ENCODE measurements at regions of chr17 and their contacts with region 1.

Region 1: GRCh38 chr17:60036796-60037612 is 41.7 kb downstream of the HEATR6 start:
- H3K4me3 Mint-ChIP-seq: no peak overlapping the region
- H3K27ac Mint-ChIP-seq: no peak overlapping the region
- H3K4me1 Mint-ChIP-seq: peaks cover 6% of the 10 kb centered on the region
- H3K27me3 Mint-ChIP-seq: peaks cover 15% of the 10 kb centered on the region

Region 2: DNA sequence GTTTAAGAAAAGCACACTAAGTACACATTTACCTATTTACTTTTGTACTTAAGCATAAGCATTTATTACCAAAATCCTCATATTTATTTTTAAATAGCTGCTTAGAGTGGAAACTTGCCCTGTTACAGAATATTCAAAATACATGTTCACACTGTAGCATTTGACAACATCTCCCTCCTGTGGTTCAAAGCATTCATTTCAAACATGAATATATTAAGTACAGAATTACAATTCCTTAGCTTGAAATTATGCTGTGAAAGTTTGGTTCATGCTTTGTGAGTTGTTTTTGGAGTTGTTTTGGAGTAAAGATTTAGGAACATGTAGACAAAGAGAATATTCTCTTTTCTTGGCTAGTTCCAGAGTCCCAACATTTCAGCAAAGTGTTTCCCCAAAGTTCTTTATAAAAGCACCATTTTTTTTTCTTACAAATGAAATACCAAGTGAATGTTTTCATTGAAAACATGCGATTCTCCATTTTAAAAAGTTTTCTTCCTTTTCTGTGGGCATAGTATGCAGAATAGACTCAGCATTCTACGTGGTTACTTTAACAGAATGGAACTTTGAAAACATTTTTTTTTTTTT is 177.5 kb before region 1 on chr17:
- intact Hi-C with region 1: no loop called
- H3K4me3 Mint-ChIP-seq: no peak overlapping the region
- H3K27ac Mint-ChIP-seq: no peak overlapping the region
- H3K4me1 Mint-ChIP-seq: peaks cover 19% of the 10 kb centered on the region
- H3K27me3 Mint-ChIP-seq: no peaks in the 10 kb centered on the region

Region 3: DNA sequence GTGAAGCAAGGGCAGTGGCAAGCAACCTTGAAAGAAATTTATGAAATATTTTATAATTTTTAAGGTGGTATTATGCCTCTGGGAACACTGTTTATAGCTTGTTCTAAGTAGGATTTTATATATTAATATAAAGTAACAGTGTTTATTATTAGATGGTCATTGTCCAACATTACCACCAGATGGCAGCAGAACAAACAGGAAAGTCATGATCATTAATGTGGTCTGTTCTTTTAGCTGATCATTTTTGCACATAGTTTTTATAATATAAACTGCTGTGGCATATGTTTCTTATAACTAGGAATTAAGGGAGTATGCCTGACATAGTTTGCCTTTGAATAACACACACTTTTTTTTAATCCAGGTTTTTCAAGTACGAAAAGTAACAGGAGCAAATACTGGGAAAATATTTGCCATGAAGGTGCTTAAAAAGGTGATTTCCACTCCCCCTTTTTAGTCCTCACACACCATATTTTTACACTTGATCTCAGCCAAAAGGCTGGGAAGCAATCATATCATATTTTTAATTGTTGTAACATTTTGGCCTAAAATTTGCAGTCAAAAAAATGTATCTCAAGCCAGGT is 122.6 kb before region 1 on chr17:
- intact Hi-C with region 1: loop called (anchors 10 kb)
- H3K4me3 Mint-ChIP-seq: no peak overlapping the region
- H3K27ac Mint-ChIP-seq: no peak overlapping the region
- H3K4me1 Mint-ChIP-seq: no peaks in the 10 kb centered on the region
- H3K27me3 Mint-ChIP-seq: no peaks in the 10 kb centered on the region

Region 4: DNA sequence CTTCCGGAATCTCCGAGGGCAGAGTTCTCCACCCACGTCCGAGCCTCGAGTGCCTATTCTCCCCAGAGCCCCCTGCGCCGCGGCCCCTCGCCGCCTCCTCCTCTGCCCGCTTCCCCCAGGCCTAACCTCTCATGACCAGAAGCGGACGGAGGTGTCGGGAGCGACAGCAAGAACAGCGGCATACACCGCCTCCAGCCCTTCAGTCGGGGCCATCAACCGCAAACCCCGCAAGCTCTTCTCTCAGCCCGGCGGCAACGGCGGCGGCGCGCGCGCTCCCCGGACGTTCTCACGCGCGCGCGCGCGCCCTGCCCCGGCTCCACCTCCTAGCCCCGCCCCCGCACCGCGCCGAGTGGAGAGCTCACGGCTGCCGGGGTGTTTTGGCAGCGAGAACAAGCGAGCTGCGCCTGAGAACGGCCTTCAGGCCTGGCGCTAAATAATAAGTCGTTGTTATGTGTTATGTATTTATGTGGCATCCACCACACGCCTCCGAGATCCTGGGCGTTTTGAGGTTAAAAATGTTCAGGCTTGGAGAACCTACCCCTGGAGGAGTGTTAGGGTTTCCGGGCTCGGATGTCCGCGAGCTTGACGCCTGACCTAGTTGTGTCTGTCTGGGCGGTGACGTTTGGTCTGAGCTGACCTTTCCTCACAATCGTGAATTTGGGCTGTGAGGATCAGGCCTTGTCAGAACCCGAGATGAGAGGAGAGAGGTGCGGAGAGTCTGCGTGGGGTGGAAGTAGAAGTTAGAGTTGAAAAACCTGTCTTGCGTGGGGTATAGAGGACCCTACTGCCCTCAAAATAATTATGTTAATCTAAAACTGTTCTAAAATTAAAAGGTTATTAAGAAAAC is 72.3 kb before region 1 on chr17 and contains the start of gene RNFT1:
- intact Hi-C with region 1: loop called (anchors 10 kb)
- H3K4me3 Mint-ChIP-seq: peak within 1 kb of the TSS; percentile 90
- H3K27ac Mint-ChIP-seq: peak within 1 kb of the TSS; percentile 96
- H3K4me1 Mint-ChIP-seq: peaks cover 25% of the 10 kb centered on the region
- H3K27me3 Mint-ChIP-seq: no peaks in the 10 kb centered on the region